PC-3 (cell line): ENCODE measurements at regions of chr12 and their contacts with region 1.

Region 1: GRCh38 chr12:47079468-47079980 is at the starts of genes AMIGO2 and PCED1B:
- DNase-seq: peak; percentile 80
- ATAC-seq: peak; percentile 48
- H3K4me3 ChIP-seq: peak within 1 kb of the TSS; percentile 82
- H3K27ac ChIP-seq: peak within 1 kb of the TSS; percentile 85
- H3K4me1 ChIP-seq: peaks cover 66% of the 10 kb centered on the region
- H3K27me3 ChIP-seq: no peaks in the 10 kb centered on the region
- CTCF ChIP-seq: peak; percentile 59
- total RNA-seq, gene AMIGO2: 19.3 and 22.2 TPM in 2 replicates
- total RNA-seq, gene PCED1B: 1.0 TPM in 1 of 2 replicates, not detected in the other

Region 2: DNA sequence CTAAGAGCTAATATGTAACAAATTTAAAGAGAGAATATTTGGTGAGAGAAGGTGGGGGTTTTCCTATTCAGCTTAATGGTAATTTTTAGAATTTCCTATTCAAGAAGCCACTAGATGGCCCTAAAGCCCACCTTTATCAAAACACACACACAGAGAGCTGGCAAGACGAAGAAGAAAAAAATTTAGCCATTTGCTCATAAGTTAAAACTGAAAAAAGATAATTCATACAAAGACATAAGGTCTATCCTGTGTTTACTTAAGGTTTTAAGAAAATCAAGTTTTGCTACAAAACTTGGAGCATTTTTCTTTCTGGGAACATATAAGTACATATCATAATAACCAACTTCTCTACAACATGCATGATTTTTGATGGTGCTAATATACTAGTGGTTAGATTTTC is 46.9 kb before region 1 on chr12:
- CTCF ChIA-PET with region 1: interaction called, 15 read pairs
- POLR2A ChIA-PET with region 1: interaction called, 5 read pairs
- intact Hi-C with region 1: loop called (anchors 2 kb)
- DNase-seq: peak; percentile 78
- ATAC-seq: peak; percentile 58
- H3K4me3 ChIP-seq: no peak overlapping the region
- H3K27ac ChIP-seq: no peak overlapping the region
- H3K4me1 ChIP-seq: peaks cover 44% of the 10 kb centered on the region
- H3K27me3 ChIP-seq: no peaks in the 10 kb centered on the region
- CTCF ChIP-seq: peak; percentile 81

Region 3: GRCh38 chr12:47105704-47106667 is 26.5 kb after region 1 on chr12:
- CTCF ChIA-PET with region 1: no interaction called
- POLR2A ChIA-PET with region 1: interaction called, 10 read pairs
- intact Hi-C with region 1: no loop called
- DNase-seq: peak; percentile 77
- ATAC-seq: peak; percentile 72; the same call in 1 of the 2 replicates
- H3K4me3 ChIP-seq: no peak overlapping the region
- H3K27ac ChIP-seq: no peak overlapping the region
- H3K4me1 ChIP-seq: peaks cover 35% of the 10 kb centered on the region
- H3K27me3 ChIP-seq: no peaks in the 10 kb centered on the region
- CTCF ChIP-seq: no peak

Region 4: DNA sequence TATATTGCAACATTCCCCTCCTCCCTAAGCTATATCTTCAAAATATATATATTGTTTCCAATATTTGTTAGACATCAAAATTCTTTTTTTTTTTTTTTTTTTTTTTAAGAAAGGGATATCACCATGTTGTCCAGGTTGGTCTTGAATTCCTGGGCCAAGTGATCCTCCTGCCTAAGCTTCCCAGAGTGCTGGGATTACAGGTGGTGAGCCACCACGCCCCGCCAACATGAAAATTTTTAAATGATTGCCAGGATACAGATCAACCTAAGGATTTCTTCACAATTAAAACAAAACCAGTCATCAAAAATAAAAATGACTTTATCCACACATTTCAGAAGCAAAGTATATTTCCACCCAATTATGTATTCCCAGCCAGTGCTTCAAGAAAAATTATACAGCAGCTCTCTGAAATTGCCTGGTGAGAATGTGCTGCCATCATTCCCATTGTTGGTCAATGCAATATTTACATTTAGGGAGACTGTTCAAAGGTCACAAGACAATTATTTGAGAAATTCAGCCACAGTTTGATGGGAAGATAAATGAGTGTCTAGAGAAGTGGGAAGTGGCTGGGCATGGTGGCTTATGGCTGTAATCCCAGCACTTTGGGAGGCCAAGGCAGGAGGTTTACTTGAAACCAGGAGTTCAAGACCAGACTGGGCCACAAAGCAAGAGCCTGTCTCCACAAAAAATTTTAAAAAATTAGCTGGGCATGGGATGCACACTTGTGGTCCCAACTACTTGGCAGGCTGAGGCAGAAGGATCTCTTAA is 141.9 kb after region 1 on chr12:
- CTCF ChIA-PET with region 1: no interaction called
- POLR2A ChIA-PET with region 1: no interaction called
- intact Hi-C with region 1: loop called (anchors 2 kb)
- DNase-seq: peak; percentile 75
- ATAC-seq: no peak
- H3K4me3 ChIP-seq: no peak overlapping the region
- H3K27ac ChIP-seq: peak overlapping the region; percentile 92
- H3K4me1 ChIP-seq: peaks cover 62% of the 10 kb centered on the region
- H3K27me3 ChIP-seq: no peaks in the 10 kb centered on the region
- CTCF ChIP-seq: no peak

Region 5: GRCh38 chr12:47247433-47247832 is 167.9 kb after region 1 on chr12:
- CTCF ChIA-PET with region 1: no interaction called
- POLR2A ChIA-PET with region 1: no interaction called
- intact Hi-C with region 1: loop called (anchors 2 kb)
- DNase-seq: peak; percentile 91
- ATAC-seq: peak; percentile 61
- H3K4me3 ChIP-seq: no peak overlapping the region
- H3K27ac ChIP-seq: peak overlapping the region; percentile 82
- H3K4me1 ChIP-seq: peaks cover 58% of the 10 kb centered on the region
- H3K27me3 ChIP-seq: no peaks in the 10 kb centered on the region
- CTCF ChIP-seq: no peak

Region 6: GRCh38 chr12:47276621-47277309 is 197.2 kb after region 1 on chr12:
- CTCF ChIA-PET with region 1: no interaction called
- POLR2A ChIA-PET with region 1: interaction called, 3 read pairs
- intact Hi-C with region 1: loop called (anchors 2 kb)
- DNase-seq: peak; percentile 90
- ATAC-seq: peak; percentile 57
- H3K4me3 ChIP-seq: no peak overlapping the region
- H3K27ac ChIP-seq: peak overlapping the region; percentile 79
- H3K4me1 ChIP-seq: peaks cover 69% of the 10 kb centered on the region
- H3K27me3 ChIP-seq: no peaks in the 10 kb centered on the region
- CTCF ChIP-seq: no peak

Region 7: GRCh38 chr12:47397664-47398281 is 318.2 kb after region 1 on chr12:
- CTCF ChIA-PET with region 1: interaction called, 3 read pairs
- POLR2A ChIA-PET with region 1: no interaction called
- intact Hi-C with region 1: loop called (anchors 1 kb)
- DNase-seq: peak; percentile 94
- ATAC-seq: peak; percentile 88
- H3K4me3 ChIP-seq: no peak overlapping the region
- H3K27ac ChIP-seq: no peak overlapping the region
- H3K4me1 ChIP-seq: peaks cover 25% of the 10 kb centered on the region
- H3K27me3 ChIP-seq: no peaks in the 10 kb centered on the region
- CTCF ChIP-seq: peak; percentile 93